ENCODE measurements at regions of chr18 and their contacts with region 1.

Region 1: GRCh38 chr18:6120820-6121279 is 225.5 kb upstream of the TMEM200C start:
- DNase-seq: peak in 1 of 5 donors; percentile 40
- ATAC-seq: peak; percentile 96 to 98 (median 97)
- H3K4me3 ChIP-seq: no peak overlapping the region
- H3K27ac ChIP-seq: peak overlapping the region in 8 of 12 donors; percentile 24 to 85 (median 58)
- H3K4me1 ChIP-seq: peaks cover 0 to 28% (median 11%) of the 10 kb centered on the region in 12 donors
- H3K27me3 ChIP-seq: no peaks in the 10 kb centered on the region
- CTCF ChIP-seq: no peak
- POLR2A ChIP-seq: no peak

Region 2: GRCh38 chr18:6056146-6056932 is 64.5 kb before region 1 on chr18:
- intact Hi-C with region 1: loop called in 4 of 10 experiments (anchors 2 to 10 kb)
- DNase-seq: no peak
- ATAC-seq: peak in 1 of 4 donors; percentile 20
- H3K4me3 ChIP-seq: no peak overlapping the region
- H3K27ac ChIP-seq: peak overlapping the region in 8 of 12 donors; percentile 19 to 67 (median 36)
- H3K4me1 ChIP-seq: peaks cover 0 to 43% (median 10%) of the 10 kb centered on the region in 12 donors
- H3K27me3 ChIP-seq: no peaks in the 10 kb centered on the region
- CTCF ChIP-seq: no peak
- POLR2A ChIP-seq: no peak